Activated CD8-positive, alpha-beta T cell treated with anti-CD3 and anti-CD28 coated beads for 36 hours (primary cell): ENCODE measurements at regions of chrX and their contacts with region 1.

Region 1: DNA sequence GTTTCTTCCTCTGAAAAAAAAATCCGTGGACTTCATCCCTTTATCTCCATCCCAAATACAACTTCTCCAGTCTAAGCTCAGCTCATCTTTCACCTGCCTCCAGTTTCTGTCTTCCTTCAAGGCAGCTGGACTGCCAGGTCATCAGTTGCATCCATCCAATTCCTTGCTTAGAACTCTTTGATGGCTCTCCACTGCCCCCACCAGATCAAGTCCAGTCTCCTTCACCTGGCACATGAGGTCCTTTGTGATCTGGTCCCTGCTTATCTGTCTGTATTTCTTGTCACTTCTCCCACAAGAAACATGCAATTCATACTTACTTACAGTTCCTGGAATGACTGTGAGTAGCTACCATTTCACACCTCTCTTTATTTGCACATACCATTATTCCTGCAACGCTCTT is 33.8 kb downstream of the OTUD6A start:
- DNase-seq: no peak
- ATAC-seq: no peak
- H3K4me3 Mint-ChIP-seq: no peak overlapping the region
- H3K27ac Mint-ChIP-seq: no peak overlapping the region
- H3K4me1 Mint-ChIP-seq: no peaks in the 10 kb centered on the region
- H3K27me3 Mint-ChIP-seq: peaks cover 3% of the 10 kb centered on the region
- CTCF ChIP-seq: no peak

Region 2: GRCh38 chrX:69493193-69493592 is 602.9 kb before region 1 on chrX:
- CTCF ChIA-PET with region 1: interaction called, 4 read pairs
- POLR2A ChIA-PET with region 1: no interaction called
- intact Hi-C with region 1: loop called (anchors 10 kb)
- DNase-seq: peak; percentile 38
- ATAC-seq: no peak
- H3K4me3 Mint-ChIP-seq: no peak overlapping the region
- H3K27ac Mint-ChIP-seq: no peak overlapping the region
- H3K4me1 Mint-ChIP-seq: no peaks in the 10 kb centered on the region
- H3K27me3 Mint-ChIP-seq: peaks cover 3% of the 10 kb centered on the region
- CTCF ChIP-seq: peak; percentile 36

Region 3: DNA sequence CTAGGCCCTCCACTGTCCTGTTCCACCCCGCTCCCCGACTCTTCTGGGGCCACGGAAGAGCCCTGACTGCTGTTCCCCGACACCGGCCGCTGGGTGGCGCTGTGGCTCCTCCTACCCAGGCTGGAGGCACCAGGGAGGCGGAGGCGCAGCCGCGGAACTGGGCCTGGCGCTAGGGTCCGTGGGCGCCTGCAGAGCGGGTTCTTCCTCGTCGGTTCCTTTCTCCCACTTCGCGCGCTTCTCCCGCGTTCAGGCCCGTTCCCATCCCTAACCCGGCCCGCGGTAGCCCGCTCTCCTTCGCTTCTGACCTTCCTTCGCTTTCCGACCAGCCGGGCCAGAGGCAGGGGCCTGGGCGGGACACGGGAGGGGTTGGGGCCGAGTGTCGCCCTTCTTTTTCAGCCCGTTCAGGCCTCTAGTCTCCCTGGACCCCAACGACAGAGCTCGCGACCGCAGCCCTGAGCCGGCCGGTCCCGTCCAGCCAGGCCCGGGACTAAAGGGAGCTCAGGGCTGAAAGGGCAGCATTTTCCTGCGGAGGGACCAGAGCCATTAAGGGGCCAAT is 557.7 kb before region 1 on chrX:
- CTCF ChIA-PET with region 1: interaction called, 19 read pairs
- POLR2A ChIA-PET with region 1: no interaction called
- intact Hi-C with region 1: no loop called
- DNase-seq: peak; percentile 71
- ATAC-seq: peak; percentile 92
- H3K4me3 Mint-ChIP-seq: peak overlapping the region; percentile 27
- H3K27ac Mint-ChIP-seq: no peak overlapping the region
- H3K4me1 Mint-ChIP-seq: peaks cover 9% of the 10 kb centered on the region
- H3K27me3 Mint-ChIP-seq: peaks cover 16% of the 10 kb centered on the region
- CTCF ChIP-seq: peak; percentile 53

Region 4: DNA sequence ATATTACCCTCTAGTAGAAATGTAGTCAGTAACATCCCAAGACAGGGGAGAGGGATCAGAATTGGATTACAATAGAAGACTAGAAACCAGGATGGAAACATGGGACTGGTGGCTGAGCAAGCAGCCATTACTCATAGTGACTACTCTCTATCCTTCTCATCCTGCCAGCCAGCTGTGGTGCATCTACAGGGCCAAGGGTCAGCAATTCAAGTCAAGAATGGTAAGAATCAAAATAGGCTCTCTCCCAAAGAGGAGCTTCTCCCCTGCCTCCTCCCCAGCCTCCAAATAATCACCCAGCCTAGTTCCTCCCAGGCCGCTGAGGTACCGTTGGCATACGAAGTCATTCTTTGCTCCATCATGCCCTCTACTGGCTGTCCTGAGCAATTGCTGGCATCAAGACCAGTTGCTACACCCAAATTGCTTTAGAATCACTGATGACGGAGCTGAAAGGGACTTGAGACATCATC is 65.7 kb before region 1 on chrX:
- CTCF ChIA-PET with region 1: interaction called, 29 read pairs
- POLR2A ChIA-PET with region 1: no interaction called
- intact Hi-C with region 1: loop called (anchors 5 kb)
- DNase-seq: peak; percentile 21
- ATAC-seq: peak; percentile 71
- H3K4me3 Mint-ChIP-seq: no peak overlapping the region
- H3K27ac Mint-ChIP-seq: no peak overlapping the region
- H3K4me1 Mint-ChIP-seq: peaks cover 8% of the 10 kb centered on the region
- H3K27me3 Mint-ChIP-seq: no peaks in the 10 kb centered on the region
- CTCF ChIP-seq: peak; percentile 59